GM12878 (cell line): ENCODE measurements at regions of chr1 and their contacts with region 1.

Region 1: GRCh38 chr1:235253219-235253962 is 74.6 kb downstream of the ARID4B start:
- DNase-seq: no peak
- ATAC-seq: peak; percentile 100
- H3K4me3 ChIP-seq: no peak overlapping the region
- H3K27ac ChIP-seq: no peak overlapping the region
- H3K4me1 ChIP-seq: peaks cover 2% of the 10 kb centered on the region; the same call in 1 of the 2 replicates
- H3K27me3 ChIP-seq: no peaks in the 10 kb centered on the region
- CTCF ChIP-seq: peak; percentile 86 to 91 (median 88); a peak in 5 of 6 replicates
- EP300 ChIP-seq: no peak
- POLR2A ChIP-seq: no peak
- RAD21 ChIP-seq: peak; percentile 87

Region 2: GRCh38 chr1:235239851-235240250 is 13.5 kb before region 1 on chr1:
- CTCF ChIA-PET with region 1: interaction called, 19 read pairs
- POLR2A ChIA-PET with region 1: no interaction called
- RAD21 ChIA-PET with region 1: interaction called, 3 read pairs
- SMC1A ChIA-PET with region 1: interaction called, 11 read pairs
- in situ Hi-C with region 1: no loop called
- intact Hi-C with region 1: no loop called
- DNase-seq: no peak
- ATAC-seq: no peak
- H3K4me3 ChIP-seq: no peak overlapping the region
- H3K27ac ChIP-seq: no peak overlapping the region
- H3K4me1 ChIP-seq: 0 out of 2 replicates have a peak, but pooled peaks cover 4% of the 10 kb centered on the region
- H3K27me3 ChIP-seq: no peaks in the 10 kb centered on the region
- CTCF ChIP-seq: no peak
- EP300 ChIP-seq: no peak
- POLR2A ChIP-seq: no peak
- RAD21 ChIP-seq: no peak

Region 3: DNA sequence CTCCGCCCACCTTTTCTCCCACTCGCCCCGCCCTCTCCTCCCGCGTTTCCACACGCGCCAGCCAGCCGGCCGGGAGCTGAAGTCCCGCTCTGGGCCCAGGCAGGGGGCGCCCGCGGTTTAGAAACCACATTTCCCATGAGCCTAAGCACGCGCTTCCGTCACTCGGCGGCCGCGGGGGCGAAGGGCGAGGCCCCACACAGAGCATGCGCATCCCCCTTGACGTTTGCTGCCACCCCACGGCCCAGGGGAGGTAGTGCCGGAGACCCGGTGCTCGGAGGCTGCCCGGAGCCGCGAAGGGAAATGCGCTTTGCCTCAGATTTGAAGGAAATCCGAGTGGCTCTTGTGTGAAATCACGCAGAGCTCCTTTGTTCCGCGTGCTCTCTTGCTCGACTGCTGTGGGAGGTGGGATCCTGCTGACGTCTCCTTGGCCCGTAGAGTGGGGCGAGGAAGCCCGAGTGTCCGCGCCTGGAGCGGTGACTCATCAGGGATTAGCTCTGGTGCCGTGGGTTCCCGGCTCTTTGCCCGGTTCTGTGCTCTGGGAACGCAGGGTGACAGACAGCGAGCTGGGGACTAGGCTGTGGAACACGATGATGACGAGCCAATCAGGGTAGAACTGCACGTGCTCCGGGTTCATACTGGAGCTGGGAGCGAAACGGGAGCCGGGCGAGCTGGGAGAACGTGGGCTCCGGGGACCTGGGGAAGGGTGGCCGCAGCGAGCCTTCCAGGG is 251.3 kb after region 1 on chr1:
- CTCF ChIA-PET with region 1: interaction called, 3 read pairs
- POLR2A ChIA-PET with region 1: no interaction called
- RAD21 ChIA-PET with region 1: no interaction called
- SMC1A ChIA-PET with region 1: no interaction called
- in situ Hi-C with region 1: no loop called
- intact Hi-C with region 1: loop called (anchors 10 kb)
- DNase-seq: peak; percentile 96
- ATAC-seq: peak; percentile 86
- H3K4me3 ChIP-seq: peak overlapping the region; percentile 92
- H3K27ac ChIP-seq: peak overlapping the region; percentile 95
- H3K4me1 ChIP-seq: peaks cover 6% of the 10 kb centered on the region
- H3K27me3 ChIP-seq: no peaks in the 10 kb centered on the region
- CTCF ChIP-seq: peak; percentile 82 to 91 (median 86)
- EP300 ChIP-seq: peak in 1 of 2 experiments; percentile 51; a peak in 1 of 4 replicates
- POLR2A ChIP-seq: peak; percentile 86
- RAD21 ChIP-seq: peak; percentile 48; the same call in 1 of the 2 replicates